A549 (cell line): ENCODE measurements at regions of chr16 and their contacts with region 1.

Region 1: DNA sequence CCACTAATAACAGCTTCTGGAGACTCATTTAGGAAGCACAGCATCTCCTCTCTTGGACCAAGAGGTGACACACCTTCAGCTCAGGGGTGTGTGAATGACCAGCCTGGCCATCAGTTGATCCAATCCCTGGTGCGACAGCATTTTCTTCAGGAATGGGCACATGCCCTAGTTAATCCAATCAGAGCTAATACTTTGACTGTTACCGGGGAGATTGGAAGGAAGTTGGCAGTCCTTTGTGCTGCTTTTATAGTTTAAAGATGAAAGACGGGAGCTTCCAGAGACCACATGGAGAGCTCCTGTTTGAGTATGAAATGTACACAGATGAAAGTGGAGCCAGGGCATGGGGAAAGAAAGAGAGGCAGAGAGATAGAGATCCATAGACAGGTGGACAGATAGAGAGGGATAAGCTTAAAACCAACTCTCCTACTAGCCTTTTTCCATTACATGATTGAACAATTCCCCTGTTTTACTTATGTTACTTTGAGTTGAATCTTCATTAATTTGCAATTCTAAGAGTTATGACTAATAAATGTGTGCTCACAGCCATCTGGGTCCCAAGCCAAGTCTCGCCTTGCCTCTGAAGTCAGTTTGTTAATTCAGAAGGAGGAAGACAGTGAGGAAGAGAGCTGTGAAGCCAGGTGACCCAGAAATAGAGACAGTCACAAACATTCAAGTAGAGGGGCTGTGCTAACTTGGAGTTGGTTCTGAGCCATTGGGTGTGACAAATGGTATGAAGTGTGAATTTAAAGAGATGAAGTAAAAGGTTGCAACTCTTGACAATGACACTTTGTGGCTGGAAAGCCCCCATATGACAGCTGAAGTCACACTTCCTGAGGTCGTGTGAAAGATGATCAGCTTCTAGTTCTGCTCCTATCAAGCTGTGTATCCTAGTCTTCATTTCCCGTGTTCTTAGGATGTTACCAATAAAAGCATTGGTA is 120.0 kb upstream of the GOT2 start:
- DNase-seq: no peak
- ATAC-seq: peak in 1 of 2 experiments; percentile 30; a peak in 2 of 6 replicates
- H3K4me3 ChIP-seq: no peak overlapping the region
- H3K27ac ChIP-seq: no peak overlapping the region
- H3K4me1 ChIP-seq: no peaks in the 10 kb centered on the region
- CTCF ChIP-seq: no peak
- EP300 ChIP-seq: no peak
- POLR2A ChIP-seq: no peak
- RAD21 ChIP-seq: no peak

Region 2: DNA sequence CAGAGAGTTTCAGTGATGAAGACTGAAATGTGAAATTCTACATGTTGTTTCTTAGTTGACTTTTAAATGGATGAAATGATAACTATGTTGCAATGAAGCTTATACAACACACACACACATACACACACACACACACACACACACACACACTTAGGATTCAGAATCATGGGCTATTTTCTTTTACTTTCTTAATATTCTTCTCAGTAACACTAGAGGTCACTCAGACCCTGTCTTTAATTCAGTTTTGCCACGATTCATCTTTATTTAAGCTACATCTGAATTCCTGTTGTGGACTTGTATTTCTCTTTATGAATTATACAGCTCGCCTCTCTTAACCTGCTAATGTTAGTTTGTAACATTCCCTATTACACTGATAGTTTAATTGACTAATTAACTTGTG is 10.4 kb before region 1 on chr16:
- CTCF ChIA-PET with region 1: interaction called, 18 read pairs
- POLR2A ChIA-PET with region 1: no interaction called
- DNase-seq: peak in 1 of 2 experiments; percentile 60
- ATAC-seq: peak; percentile 47 to 67; a peak in 5 of 6 replicates
- H3K4me3 ChIP-seq: no peak overlapping the region
- H3K27ac ChIP-seq: no peak overlapping the region
- H3K4me1 ChIP-seq: peaks cover 9% of the 10 kb centered on the region; the same call in 2 of the 3 replicates
- CTCF ChIP-seq: peak; percentile 66
- EP300 ChIP-seq: no peak
- POLR2A ChIP-seq: no peak
- RAD21 ChIP-seq: peak; percentile 74 to 83